ENCODE measurements at regions of chr10 and their contacts with region 1.

Region 1: GRCh38 chr10:114720685-114721278 is 62.7 kb upstream of the ABLIM1 start:
- DNase-seq: no peak
- H3K4me3 ChIP-seq: no peak overlapping the region
- H3K27ac ChIP-seq: no peak overlapping the region
- H3K4me1 ChIP-seq: peaks cover 0 to 11% of the 10 kb centered on the region in 2 donors
- H3K27me3 ChIP-seq: no peaks in the 10 kb centered on the region
- CTCF ChIP-seq: no peak

Region 2: DNA sequence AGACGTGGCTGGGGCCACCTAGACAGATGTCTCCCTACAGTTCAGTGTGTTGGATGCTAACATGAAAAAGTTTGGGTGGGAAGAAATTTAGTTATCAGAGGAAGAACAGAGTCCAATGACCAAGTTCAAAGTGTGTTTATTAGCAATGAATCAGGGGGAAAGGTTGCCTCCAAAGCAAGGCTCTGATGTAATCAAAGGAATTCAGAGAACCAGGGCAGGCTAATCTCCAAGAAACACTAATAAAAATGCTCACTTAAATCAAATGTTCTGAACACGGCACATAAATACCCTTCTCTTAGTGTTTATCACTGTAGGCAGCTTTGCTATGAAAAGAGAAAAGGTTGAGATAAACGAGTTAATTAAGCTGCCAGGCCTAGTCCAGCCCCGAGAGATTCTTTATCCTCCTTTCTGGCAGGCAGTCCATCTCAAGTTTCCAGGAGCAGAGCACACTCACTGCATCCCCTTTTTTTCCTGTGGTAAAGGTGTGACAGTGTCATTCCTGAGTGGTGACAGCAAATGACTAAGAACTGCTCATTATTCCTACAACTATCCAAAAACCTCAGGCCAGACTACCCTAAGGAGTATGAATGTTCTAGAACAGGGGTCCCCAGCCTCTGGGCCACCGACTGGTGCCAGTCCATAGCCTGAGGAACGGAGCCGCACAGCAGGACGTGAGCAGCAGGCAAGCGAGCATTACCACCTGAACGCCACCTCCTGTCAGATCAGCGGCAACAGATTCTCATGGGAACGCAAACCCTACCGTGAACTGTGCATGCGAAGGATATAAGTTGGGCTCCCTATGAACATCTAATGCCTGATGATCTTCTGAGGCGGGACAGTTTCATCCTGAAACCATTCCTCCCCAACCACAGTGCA is 33.9 kb after region 1 on chr10:
- intact Hi-C with region 1: loop called (anchors 5 kb)
- DNase-seq: no peak
- H3K4me3 ChIP-seq: no peak overlapping the region
- H3K27ac ChIP-seq: no peak overlapping the region
- H3K4me1 ChIP-seq: no peaks in the 10 kb centered on the region
- H3K27me3 ChIP-seq: no peaks in the 10 kb centered on the region
- CTCF ChIP-seq: no peak